ENCODE measurements at regions of chr12 and their contacts with region 1.

Region 1: DNA sequence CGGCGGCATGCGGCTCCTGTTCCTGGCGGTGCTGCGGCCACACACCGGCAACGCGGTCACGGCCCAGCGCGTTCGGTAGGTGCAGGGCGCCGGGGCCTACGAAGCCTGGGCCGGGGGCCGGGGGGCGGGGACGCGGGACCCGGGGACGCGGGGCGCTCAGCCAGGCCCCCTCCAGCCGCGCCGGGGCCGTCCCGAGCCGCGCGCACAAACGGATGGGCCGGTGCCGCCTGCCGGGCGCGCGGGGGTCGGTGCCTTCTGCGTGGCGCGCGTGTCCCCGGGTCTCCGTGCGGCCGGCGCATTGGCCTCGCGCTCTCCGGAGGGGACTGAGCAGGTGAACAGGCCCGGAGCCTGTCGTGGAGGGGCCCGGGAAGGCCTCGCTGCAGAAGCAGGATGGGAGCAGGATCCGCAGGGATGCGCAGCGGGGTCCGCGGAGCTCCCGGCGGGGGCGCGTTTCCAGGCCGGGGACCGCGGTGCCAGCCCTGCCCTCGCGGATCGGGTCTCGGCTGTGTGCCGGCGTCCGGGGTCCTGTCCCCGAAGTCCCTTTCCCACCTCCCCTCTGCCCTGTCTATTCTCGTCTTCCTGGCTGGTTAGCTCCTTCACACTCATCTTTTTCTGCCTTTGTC is 408 bp downstream of the GLT1D1 start:
- DNase-seq: no peak
- ATAC-seq: no peak
- H3K4me3 ChIP-seq: no peak overlapping the region
- H3K27ac ChIP-seq: no peak overlapping the region
- H3K4me1 ChIP-seq: no peaks in the 10 kb centered on the region
- H3K27me3 ChIP-seq: no peaks in the 10 kb centered on the region; the same call in 1 of the 2 replicates
- CTCF ChIP-seq: no peak

Region 2: GRCh38 chr12:128594521-128594920 is 259.2 kb before region 1 on chr12:
- CTCF ChIA-PET with region 1: no interaction called
- POLR2A ChIA-PET with region 1: no interaction called
- in situ Hi-C with region 1: no loop called
- intact Hi-C with region 1: no loop called
- DNase-seq: no peak
- ATAC-seq: no peak
- H3K4me3 ChIP-seq: no peak overlapping the region
- H3K27ac ChIP-seq: no peak overlapping the region
- H3K4me1 ChIP-seq: no peaks in the 10 kb centered on the region
- H3K27me3 ChIP-seq: no peaks in the 10 kb centered on the region
- CTCF ChIP-seq: no peak

Region 3: DNA sequence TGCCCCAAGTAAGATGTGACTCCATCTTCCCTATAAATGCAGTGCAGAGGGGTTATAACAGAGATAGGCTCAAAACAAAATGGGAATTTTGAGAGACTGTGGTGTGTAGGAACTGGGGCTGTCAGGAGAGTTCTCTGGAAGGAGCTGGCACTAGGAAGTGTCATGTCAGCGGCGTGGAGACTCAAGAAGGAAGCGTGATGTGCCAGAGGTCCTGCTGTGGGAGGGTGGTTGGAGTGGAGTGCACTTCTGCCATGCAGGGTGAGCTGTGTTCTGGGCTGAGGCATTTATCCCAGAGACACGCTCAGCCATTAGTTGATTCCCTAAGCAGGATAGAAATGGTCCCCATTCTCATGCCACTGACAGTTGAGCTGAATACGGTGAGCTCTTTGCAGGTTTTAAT is 18.6 kb after region 1 on chr12:
- CTCF ChIA-PET with region 1: no interaction called
- POLR2A ChIA-PET with region 1: interaction called, 12 read pairs
- in situ Hi-C with region 1: no loop called
- intact Hi-C with region 1: no loop called
- DNase-seq: no peak
- ATAC-seq: no peak
- H3K4me3 ChIP-seq: no peak overlapping the region
- H3K27ac ChIP-seq: no peak overlapping the region
- H3K4me1 ChIP-seq: no peaks in the 10 kb centered on the region
- H3K27me3 ChIP-seq: no peaks in the 10 kb centered on the region
- CTCF ChIP-seq: no peak

Region 4: DNA sequence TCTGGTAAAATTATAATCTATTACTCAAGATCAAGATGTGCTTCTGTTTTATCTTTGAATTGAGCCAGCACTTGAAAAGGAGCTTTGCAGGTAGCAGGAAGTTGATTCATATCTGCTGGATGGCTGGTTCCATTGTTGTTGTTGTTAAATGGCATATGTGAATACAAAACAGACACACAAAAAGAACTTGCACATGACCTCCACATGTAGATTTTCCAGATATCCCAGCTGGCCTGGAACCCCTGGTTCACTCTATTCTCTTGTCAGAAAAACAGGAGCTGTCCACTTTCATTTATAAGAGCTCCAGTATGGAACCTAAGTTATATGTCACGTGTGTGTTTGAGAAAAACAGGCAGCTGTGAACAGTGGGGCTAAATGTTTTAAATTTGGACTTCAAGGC is 776.2 kb after region 1 on chr12:
- CTCF ChIA-PET with region 1: no interaction called
- POLR2A ChIA-PET with region 1: interaction called, 14 read pairs
- in situ Hi-C with region 1: no loop called
- intact Hi-C with region 1: no loop called
- DNase-seq: no peak
- ATAC-seq: no peak
- H3K4me3 ChIP-seq: no peak overlapping the region
- H3K27ac ChIP-seq: no peak overlapping the region
- H3K4me1 ChIP-seq: no peaks in the 10 kb centered on the region
- H3K27me3 ChIP-seq: no peaks in the 10 kb centered on the region
- CTCF ChIP-seq: no peak

Measured in Panc1 (cell line).